ENCODE measurements at regions of chr6 and their contacts with region 1.

Region 1: DNA sequence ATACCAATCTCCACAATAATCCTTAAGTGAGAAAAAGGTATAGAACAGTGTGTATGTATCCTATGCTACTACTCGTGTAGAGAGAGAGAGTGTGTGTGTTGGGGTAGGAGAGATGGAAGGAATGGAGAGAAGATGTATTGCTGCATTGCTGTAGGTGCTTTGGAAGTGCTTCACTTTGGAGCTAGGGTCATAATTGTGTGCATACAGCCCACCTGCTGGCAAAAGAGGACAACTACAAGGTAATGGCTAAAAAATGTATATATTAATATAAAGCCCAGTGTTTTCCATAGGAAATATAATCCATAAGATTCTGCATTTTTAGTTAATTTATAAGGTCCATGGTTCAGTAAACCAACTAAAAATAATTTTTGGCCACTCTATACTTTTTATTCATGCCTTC is 36.1 kb downstream of the SERAC1 start:
- DNase-seq: peak; percentile 41
- ATAC-seq: peak; percentile 64
- H3K4me3 Mint-ChIP-seq: no peak overlapping the region
- H3K27ac Mint-ChIP-seq: no peak overlapping the region
- H3K4me1 Mint-ChIP-seq: no peaks in the 10 kb centered on the region
- H3K27me3 Mint-ChIP-seq: no peaks in the 10 kb centered on the region

Region 2: DNA sequence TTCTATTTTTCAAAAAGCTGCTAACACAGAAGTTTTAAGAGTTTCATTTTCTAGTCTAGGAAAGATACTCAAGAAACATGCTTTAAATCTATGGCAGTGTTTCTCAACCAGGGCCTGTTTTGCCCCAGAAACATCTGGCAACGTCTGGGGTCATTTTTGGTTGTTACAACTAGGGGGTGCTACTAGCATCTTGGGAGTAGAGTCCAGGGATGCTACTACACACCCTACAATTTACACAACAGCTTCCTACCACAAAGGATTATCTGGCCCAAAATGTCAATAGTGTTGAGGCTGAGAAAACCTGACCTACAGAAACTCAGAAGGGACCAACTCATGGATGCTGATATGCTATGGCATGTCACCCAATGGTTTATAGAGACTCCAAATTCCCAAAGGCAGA is 11.8 kb after region 1 on chr6:
- CTCF ChIA-PET with region 1: interaction called, 18 read pairs
- POLR2A ChIA-PET with region 1: no interaction called
- DNase-seq: no peak
- ATAC-seq: no peak
- H3K4me3 Mint-ChIP-seq: no peak overlapping the region
- H3K27ac Mint-ChIP-seq: no peak overlapping the region
- H3K4me1 Mint-ChIP-seq: no peaks in the 10 kb centered on the region
- H3K27me3 Mint-ChIP-seq: no peaks in the 10 kb centered on the region